ENCODE measurements at regions of chr10 and their contacts with region 1.

Region 1: GRCh38 chr10:60944159-60944909 is at the start of gene RHOBTB1:
- DNase-seq: peak; percentile 83
- ATAC-seq: peak; percentile 84
- H3K4me3 ChIP-seq: peak within 1 kb of the TSS; percentile 67
- H3K27ac ChIP-seq: peak within 1 kb of the TSS; percentile 92
- H3K4me1 ChIP-seq: peaks cover 2% of the 10 kb centered on the region; the same call in 1 of the 2 replicates
- H3K27me3 ChIP-seq: no peaks in the 10 kb centered on the region
- CTCF ChIP-seq: no peak
- POLR2A ChIP-seq: peak; percentile 90
- RAD21 ChIP-seq: no peak
- total RNA-seq, gene RHOBTB1: 15.2 and 18.9 TPM in 2 replicates

Region 2: DNA sequence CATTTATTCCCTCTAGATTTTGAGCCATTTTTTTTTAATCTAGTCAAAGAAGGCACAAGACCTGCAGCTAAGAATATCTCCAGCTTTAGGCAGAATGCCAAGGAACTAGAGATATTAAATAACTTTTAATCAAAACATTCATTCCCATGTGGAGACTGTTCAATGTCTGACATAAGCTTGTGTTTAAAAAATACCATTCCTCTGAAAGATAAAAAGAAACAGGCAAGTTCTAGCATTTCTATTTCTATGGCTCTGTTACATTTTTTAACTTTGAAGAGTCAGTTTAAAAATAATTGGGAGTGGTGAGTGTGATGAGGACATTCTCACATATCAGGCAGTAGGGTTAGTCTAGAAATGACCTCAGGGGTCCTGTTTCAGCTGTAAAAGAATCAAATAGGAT is 48.3 kb before region 1 on chr10:
- CTCF ChIA-PET with region 1: interaction called, 4 read pairs
- POLR2A ChIA-PET with region 1: no interaction called
- dilution Hi-C with region 1: no loop called
- in situ Hi-C with region 1: no loop called
- intact Hi-C with region 1: loop called (anchors 5 kb)
- DNase-seq: peak; percentile 82
- ATAC-seq: peak; percentile 66
- H3K4me3 ChIP-seq: no peak overlapping the region
- H3K27ac ChIP-seq: no peak overlapping the region; the same call in 1 of the 2 replicates
- H3K4me1 ChIP-seq: peaks cover 3% of the 10 kb centered on the region
- H3K27me3 ChIP-seq: no peaks in the 10 kb centered on the region
- CTCF ChIP-seq: no peak
- POLR2A ChIP-seq: no peak
- RAD21 ChIP-seq: no peak

Region 3: DNA sequence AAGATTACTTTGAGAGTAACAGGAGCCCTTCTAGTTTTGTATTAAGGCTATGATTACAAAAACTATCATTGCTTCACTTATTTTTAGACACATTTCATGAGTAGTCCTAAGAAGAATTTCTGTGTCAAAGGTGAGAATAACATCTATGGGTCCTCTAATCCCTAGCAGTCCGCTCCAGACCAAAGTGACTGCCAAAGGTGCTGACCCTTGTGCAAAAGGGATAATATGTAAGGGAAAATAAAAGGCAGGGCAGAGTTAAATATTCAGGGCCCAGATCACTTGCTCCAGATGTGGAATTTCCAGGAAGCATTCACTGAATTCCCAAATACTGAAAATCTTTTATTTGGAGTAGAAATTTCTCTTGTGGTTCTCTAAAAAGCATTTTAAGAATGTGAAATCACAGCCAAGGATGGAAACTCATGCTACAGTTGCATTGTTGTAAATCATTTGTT is 29.6 kb before region 1 on chr10:
- CTCF ChIA-PET with region 1: interaction called, 4 read pairs
- POLR2A ChIA-PET with region 1: no interaction called
- dilution Hi-C with region 1: no loop called
- in situ Hi-C with region 1: no loop called
- intact Hi-C with region 1: loop called (anchors 2 kb)
- DNase-seq: peak; percentile 93
- ATAC-seq: peak; percentile 89
- H3K4me3 ChIP-seq: no peak overlapping the region
- H3K27ac ChIP-seq: peak overlapping the region; percentile 53; the same call in 1 of the 2 replicates
- H3K4me1 ChIP-seq: peaks cover 23% of the 10 kb centered on the region
- H3K27me3 ChIP-seq: no peaks in the 10 kb centered on the region
- CTCF ChIP-seq: no peak
- POLR2A ChIP-seq: no peak
- RAD21 ChIP-seq: no peak

Measured in IMR-90 (cell line).